ENCODE measurements at regions of chr10 and their contacts with region 1.

Region 1: GRCh38 chr10:94315024-94315451 is 47.7 kb downstream of the NOC3L start:
- DNase-seq: no peak
- ATAC-seq: peak in 1 of 2 donors; percentile 34

Region 2: GRCh38 chr10:94076321-94076841 is 238.7 kb before region 1 on chr10:
- intact Hi-C with region 1: loop called in 1 of 2 experiments (anchors 10 kb)
- DNase-seq: no peak
- ATAC-seq: peak; percentile 77 to 86

Region 3: DNA sequence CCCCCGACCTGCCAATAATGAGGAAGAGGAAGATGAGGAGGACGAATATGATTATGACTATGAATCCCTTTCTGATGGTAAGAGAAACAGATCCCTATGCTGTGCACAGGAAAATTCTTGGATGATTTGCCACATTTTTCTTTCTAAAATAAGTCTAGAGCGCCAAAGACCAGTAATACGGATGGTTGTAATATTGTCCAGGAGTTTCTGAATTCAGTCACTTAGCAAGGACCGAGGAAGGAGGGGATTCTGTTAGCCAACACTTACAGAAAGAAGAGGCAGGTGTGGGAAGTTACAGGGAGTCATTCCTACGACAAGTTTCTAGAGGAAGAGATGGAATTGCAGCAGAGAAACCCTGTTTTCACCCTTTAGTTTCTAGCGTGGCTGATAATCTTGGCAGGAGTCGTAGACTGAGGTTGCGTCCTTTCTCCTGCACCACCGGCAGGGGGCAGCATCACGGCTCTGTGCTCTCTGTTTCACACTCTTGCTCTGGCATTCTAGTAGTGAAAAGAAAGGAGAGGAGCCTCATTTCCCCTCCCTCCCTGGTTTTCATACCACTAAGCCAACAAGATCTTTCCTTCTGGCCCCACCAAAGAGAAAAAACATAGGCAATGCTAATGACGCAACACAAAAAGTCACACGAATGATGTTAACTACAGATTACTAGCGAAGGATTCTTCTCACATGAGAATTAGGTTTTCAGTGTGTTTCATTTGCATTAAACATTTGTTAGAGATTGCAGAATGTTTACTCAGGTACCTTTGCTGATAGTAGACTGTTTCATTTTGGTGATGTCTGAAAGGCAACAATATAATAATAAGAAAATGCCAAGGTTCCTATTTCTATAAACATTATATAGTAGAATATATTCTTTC is 35.0 kb before region 1 on chr10:
- intact Hi-C with region 1: loop called in 1 of 2 experiments (anchors 5 kb)
- DNase-seq: peak; percentile 35
- ATAC-seq: peak; percentile 73 to 77